HepG2 (cell line): ENCODE measurements at regions of chr12 and their contacts with region 1.

Region 1: GRCh38 chr12:80269803-80270552 is 170.6 kb downstream of the OTOGL start:
- DNase-seq: peak; percentile 24
- ATAC-seq: peak; percentile 77
- H3K4me3 ChIP-seq: no peak overlapping the region
- H3K27ac ChIP-seq: no peak overlapping the region
- H3K4me1 ChIP-seq: no peaks in the 10 kb centered on the region
- H3K27me3 ChIP-seq: no peaks in the 10 kb centered on the region
- CTCF ChIP-seq: peak; percentile 68
- EP300 ChIP-seq: no peak
- POLR2A ChIP-seq: no peak
- RAD21 ChIP-seq: no peak

Region 2: GRCh38 chr12:80142640-80143039 is 127.3 kb before region 1 on chr12:
- CTCF ChIA-PET with region 1: no interaction called
- POLR2A ChIA-PET with region 1: no interaction called
- in situ Hi-C with region 1: no loop called
- intact Hi-C with region 1: no loop called
- DNase-seq: no peak
- ATAC-seq: no peak
- H3K4me3 ChIP-seq: no peak overlapping the region
- H3K27ac ChIP-seq: no peak overlapping the region
- H3K4me1 ChIP-seq: no peaks in the 10 kb centered on the region
- H3K27me3 ChIP-seq: no peaks in the 10 kb centered on the region
- CTCF ChIP-seq: no peak
- EP300 ChIP-seq: no peak
- POLR2A ChIP-seq: no peak
- RAD21 ChIP-seq: no peak

Region 3: GRCh38 chr12:80195074-80195726 is 74.8 kb before region 1 on chr12:
- CTCF ChIA-PET with region 1: interaction called, 5 read pairs
- POLR2A ChIA-PET with region 1: no interaction called
- in situ Hi-C with region 1: loop called (anchors 5 kb)
- intact Hi-C with region 1: loop called (anchors 1 kb)
- DNase-seq: peak; percentile 16
- ATAC-seq: peak; percentile 82
- H3K4me3 ChIP-seq: no peak overlapping the region
- H3K27ac ChIP-seq: no peak overlapping the region
- H3K4me1 ChIP-seq: no peaks in the 10 kb centered on the region
- H3K27me3 ChIP-seq: no peaks in the 10 kb centered on the region
- CTCF ChIP-seq: peak; percentile 38
- EP300 ChIP-seq: no peak
- POLR2A ChIP-seq: no peak
- RAD21 ChIP-seq: no peak